IMR-90 (cell line): ENCODE measurements at regions of chr11 and their contacts with region 1.

Region 1: DNA sequence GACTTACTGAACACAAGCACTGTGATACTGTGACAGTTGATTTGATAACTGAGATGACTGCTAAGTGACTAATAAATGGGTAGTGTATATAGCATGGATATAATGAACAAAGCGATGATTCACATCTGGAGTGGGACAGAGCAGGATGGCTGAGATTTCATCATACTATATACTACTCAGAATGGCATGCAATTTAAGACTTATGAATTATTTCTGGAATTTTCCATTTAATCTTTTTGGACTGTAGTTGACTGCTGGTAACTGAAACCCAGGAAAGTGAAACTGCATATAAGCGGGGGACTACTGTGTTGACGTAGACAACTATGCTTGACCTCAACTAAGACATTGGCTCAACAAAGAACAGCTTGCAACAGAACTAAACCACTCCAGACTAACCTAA is 20.0 kb upstream of the NUCB2 start:
- DNase-seq: peak; percentile 99
- ATAC-seq: peak; percentile 90
- H3K4me3 ChIP-seq: peak overlapping the region; percentile 20; the same call in 1 of the 2 replicates
- H3K27ac ChIP-seq: peak overlapping the region; percentile 97
- H3K4me1 ChIP-seq: peaks cover 10% of the 10 kb centered on the region
- H3K27me3 ChIP-seq: no peaks in the 10 kb centered on the region
- CTCF ChIP-seq: no peak
- POLR2A ChIP-seq: no peak; the same call in 1 of the 2 replicates
- RAD21 ChIP-seq: no peak

Region 2: GRCh38 chr11:16759857-16760256 is 496.7 kb before region 1 on chr11:
- CTCF ChIA-PET with region 1: no interaction called
- POLR2A ChIA-PET with region 1: no interaction called
- dilution Hi-C with region 1: no loop called
- in situ Hi-C with region 1: no loop called
- intact Hi-C with region 1: no loop called
- DNase-seq: peak; percentile 24
- ATAC-seq: 0 out of 2 replicates have a peak, but pooled peaks have one; percentile 12
- H3K4me3 ChIP-seq: no peak overlapping the region
- H3K27ac ChIP-seq: no peak overlapping the region
- H3K4me1 ChIP-seq: no peaks in the 10 kb centered on the region
- H3K27me3 ChIP-seq: no peaks in the 10 kb centered on the region
- CTCF ChIP-seq: no peak
- POLR2A ChIP-seq: no peak
- RAD21 ChIP-seq: no peak

Region 3: DNA sequence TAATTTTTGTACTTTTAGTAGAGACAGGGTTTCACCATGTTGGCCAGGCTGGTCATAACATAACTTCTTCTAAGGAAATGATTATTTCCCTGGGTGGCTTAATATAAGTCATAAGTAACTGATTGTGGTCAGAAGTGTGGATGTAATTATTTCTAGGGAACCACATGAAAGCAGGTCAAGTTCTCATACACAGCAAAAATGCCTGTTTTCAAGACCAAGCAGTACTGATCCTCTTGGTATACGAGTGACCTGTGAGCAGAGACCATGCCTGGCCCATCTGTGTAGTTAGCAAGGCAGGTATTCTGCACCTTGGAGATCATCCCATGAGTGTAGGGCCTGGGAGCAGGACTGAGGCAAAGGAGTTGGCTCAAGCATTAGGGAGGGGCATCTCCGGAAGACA is 12.5 kb before region 1 on chr11:
- CTCF ChIA-PET with region 1: no interaction called
- POLR2A ChIA-PET with region 1: interaction called, 11 read pairs
- dilution Hi-C with region 1: no loop called
- in situ Hi-C with region 1: no loop called
- intact Hi-C with region 1: no loop called
- DNase-seq: no peak
- ATAC-seq: no peak
- H3K4me3 ChIP-seq: no peak overlapping the region
- H3K27ac ChIP-seq: no peak overlapping the region
- H3K4me1 ChIP-seq: no peaks in the 10 kb centered on the region
- H3K27me3 ChIP-seq: no peaks in the 10 kb centered on the region; the same call in 1 of the 2 replicates
- CTCF ChIP-seq: no peak
- POLR2A ChIP-seq: no peak
- RAD21 ChIP-seq: no peak